Testis (tissue), 5 donors: ENCODE measurements at regions of chr1 and their contacts with region 1.

Region 1: GRCh38 chr1:223748773-223749733 is 36.7 kb downstream of the CAPN2 start:
- DNase-seq: peak; percentile 79
- H3K4me3 ChIP-seq: peak overlapping the region; percentile 47 to 60
- H3K27ac ChIP-seq: peak overlapping the region; percentile 65 to 83
- H3K4me1 ChIP-seq: peaks cover 25% of the 10 kb centered on the region
- H3K27me3 ChIP-seq: no peaks in the 10 kb centered on the region
- CTCF ChIP-seq: peak; percentile 91 to 95 (median 92)
- POLR2A ChIP-seq: no peak

Region 2: GRCh38 chr1:223341121-223341520 is 407.9 kb before region 1 on chr1:
- intact Hi-C with region 1: no loop called
- DNase-seq: peak; percentile 76
- H3K4me3 ChIP-seq: no peak overlapping the region
- H3K27ac ChIP-seq: peak overlapping the region in 1 of 2 donors; percentile 60
- H3K4me1 ChIP-seq: peaks cover 63% of the 10 kb centered on the region
- H3K27me3 ChIP-seq: no peaks in the 10 kb centered on the region
- CTCF ChIP-seq: no peak
- POLR2A ChIP-seq: no peak

Region 3: DNA sequence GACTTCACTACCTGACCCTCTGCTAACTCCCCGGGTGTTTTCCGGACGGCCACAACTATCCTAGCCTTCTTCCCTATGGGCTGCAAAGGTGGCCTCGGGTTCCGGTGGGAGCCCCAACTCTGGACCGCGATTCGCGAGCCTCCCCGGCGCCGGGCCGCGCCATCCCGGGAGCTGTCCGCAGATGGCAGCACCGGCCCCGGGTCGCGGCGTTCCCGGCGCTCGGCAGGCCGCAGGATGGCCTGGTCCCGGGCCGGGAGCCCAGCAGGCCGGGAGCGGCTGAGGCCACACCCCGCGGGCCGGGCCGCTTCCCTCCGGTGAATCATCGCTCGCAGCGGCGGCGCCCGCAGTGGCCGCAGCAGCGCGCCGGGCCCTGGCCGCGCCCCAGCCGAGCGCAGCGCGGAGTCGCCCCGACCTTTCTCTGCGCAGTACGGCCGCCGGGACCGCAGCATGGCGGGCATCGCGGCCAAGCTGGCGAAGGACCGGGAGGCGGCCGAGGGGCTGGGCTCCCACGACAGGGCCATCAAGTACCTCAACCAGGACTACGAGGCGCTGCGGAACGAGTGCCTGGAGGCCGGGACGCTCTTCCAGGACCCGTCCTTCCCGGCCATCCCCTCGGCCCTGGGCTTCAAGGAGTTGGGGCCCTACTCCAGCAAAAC is 36.7 kb before region 1 on chr1 and contains the start of gene CAPN2:
- intact Hi-C with region 1: loop called (anchors 5 kb)
- DNase-seq: peak; percentile 74
- H3K4me3 ChIP-seq: peak within 1 kb of the TSS; percentile 74 to 81
- H3K27ac ChIP-seq: peak within 1 kb of the TSS; percentile 87 to 95
- H3K4me1 ChIP-seq: peaks cover 42% of the 10 kb centered on the region
- H3K27me3 ChIP-seq: no peaks in the 10 kb centered on the region
- CTCF ChIP-seq: peak; percentile 75 to 79 (median 76)
- POLR2A ChIP-seq: no peak
- total RNA-seq, gene CAPN2: 174 to 179 TPM